Lower leg skin (tissue), 4 donors: ENCODE measurements at regions of chr14 and their contacts with region 1.

Region 1: DNA sequence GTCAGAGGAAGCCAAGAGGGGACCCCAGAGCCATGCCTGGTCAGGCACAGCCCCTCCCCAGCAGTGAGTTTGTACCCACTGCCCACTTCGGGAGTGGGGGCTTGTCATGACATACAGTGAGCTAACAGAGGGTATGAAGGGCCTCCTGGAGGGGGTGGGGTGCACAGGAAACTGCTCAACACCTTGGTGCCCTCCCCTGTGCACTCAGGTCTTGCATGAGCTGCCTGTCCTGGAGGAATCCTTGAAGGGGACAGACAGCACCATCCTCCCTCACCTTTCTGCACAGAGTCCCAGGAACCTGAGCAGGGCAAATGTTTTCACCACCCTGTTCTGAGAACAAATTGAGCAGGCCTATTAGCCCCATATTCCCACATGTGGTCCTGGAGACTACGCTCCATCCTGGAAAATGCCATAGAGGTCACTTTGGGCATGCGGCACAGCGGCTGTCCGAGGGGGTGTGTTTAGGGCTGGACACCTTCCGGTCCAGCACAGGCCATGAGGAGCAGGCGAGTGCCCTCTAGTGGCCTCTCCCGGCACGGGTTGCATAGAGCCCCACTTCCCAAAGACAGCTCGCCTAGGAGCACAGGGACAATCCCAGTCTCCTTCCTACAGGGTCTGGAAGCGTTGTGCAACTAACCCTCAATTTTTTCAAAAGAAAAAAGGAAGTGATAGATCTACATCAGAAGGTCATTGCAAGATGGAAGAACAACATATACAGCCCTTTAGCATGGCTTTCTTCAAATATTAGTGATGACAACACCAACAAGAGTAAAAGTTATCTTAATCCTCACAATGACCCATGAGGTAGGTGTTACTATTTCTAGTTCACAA is 31.9 kb upstream of the ZFP36L1 start:
- DNase-seq: peak; percentile 69 to 96
- H3K4me3 ChIP-seq: no peak overlapping the region
- CTCF ChIP-seq: peak in 1 of 3 donors; percentile 71
- POLR2A ChIP-seq: no peak

Region 2: GRCh38 chr14:67943947-67944346 is 880.8 kb before region 1 on chr14:
- intact Hi-C with region 1: loop called (anchors 1 kb)
- DNase-seq: peak; percentile 87 to 88
- H3K4me3 ChIP-seq: no peak overlapping the region
- CTCF ChIP-seq: peak in 1 of 3 donors; percentile 92
- POLR2A ChIP-seq: no peak